ENCODE measurements at regions of chr15 and their contacts with region 1.

Region 1: DNA sequence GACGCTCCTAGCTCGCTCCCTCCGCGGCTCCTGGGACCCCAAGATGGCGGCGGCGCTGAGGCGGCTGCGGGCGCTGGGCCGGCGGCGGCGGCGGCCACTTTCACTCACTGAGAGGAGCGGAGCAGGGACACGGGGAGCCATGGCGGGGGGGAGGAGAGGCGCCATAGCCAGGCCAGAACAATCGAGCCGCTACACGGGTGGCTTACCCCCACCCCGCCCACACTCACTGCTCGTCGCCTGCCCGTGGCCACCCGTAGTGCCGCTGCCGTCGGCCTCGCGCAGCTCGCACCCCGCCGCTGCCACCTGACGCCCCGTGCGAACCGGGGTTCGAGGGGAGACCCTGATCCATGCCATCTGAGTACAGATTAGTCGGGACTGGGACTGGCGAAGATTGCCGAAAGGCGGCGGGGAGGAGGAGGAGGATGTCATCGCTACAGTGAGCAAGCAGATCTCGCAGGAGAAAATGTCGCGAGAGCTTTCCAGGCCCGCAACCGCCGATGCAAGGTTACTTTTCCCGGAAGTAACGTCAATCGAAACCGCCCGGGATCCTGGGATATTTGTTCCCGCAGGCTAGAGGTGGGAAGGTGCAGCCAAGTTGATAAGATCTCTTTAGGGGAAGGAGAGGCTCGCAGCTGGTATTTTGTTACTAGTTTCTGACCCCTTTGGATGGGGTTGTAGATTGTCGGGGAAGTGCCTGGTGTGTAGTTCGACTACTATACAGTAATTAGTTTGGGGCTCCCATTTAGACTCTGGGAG is at the start of gene INO80:
- DNase-seq: peak; percentile 99
- H3K4me3 ChIP-seq: peak within 1 kb of the TSS; percentile 90 to 99 (median 93)
- H3K27ac ChIP-seq: peak within 1 kb of the TSS; percentile 99 to 100 (median 99)
- H3K4me1 ChIP-seq: peaks cover 12 to 43% (median 30%) of the 10 kb centered on the region in 4 donors
- H3K27me3 ChIP-seq: peaks cover 0 to 11% (median 0%) of the 10 kb centered on the region in 4 donors
- CTCF ChIP-seq: peak in 1 of 3 experiments; percentile 3
- EP300 ChIP-seq: peak; percentile 8
- POLR2A ChIP-seq: no peak
- total RNA-seq, gene INO80: 22.4 to 28.7 (median 24.0) TPM

Region 2: DNA sequence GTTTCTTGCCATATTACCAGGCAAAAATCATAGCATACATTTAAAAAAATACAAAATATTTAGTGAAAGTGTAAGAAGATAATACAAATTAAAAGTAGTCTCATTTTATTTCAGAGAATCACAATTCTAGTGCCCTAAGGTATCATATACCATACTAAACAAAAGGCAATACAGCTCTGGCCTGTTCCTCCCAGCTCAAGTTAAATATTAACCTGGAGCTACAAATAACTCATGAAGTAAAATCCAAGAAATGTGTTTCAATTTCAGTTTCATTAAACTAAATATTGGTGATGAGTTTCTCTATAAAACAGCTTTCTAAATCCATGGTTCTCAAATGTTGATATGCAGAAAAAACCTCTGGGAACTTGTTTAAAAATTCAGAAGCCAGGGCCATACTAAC is 67.9 kb before region 1 on chr15:
- intact Hi-C with region 1: no loop called
- DNase-seq: no peak
- H3K4me3 ChIP-seq: no peak overlapping the region
- H3K27ac ChIP-seq: no peak overlapping the region
- H3K4me1 ChIP-seq: no peaks in the 10 kb centered on the region
- H3K27me3 ChIP-seq: no peaks in the 10 kb centered on the region
- CTCF ChIP-seq: no peak
- EP300 ChIP-seq: no peak
- POLR2A ChIP-seq: no peak

Region 3: DNA sequence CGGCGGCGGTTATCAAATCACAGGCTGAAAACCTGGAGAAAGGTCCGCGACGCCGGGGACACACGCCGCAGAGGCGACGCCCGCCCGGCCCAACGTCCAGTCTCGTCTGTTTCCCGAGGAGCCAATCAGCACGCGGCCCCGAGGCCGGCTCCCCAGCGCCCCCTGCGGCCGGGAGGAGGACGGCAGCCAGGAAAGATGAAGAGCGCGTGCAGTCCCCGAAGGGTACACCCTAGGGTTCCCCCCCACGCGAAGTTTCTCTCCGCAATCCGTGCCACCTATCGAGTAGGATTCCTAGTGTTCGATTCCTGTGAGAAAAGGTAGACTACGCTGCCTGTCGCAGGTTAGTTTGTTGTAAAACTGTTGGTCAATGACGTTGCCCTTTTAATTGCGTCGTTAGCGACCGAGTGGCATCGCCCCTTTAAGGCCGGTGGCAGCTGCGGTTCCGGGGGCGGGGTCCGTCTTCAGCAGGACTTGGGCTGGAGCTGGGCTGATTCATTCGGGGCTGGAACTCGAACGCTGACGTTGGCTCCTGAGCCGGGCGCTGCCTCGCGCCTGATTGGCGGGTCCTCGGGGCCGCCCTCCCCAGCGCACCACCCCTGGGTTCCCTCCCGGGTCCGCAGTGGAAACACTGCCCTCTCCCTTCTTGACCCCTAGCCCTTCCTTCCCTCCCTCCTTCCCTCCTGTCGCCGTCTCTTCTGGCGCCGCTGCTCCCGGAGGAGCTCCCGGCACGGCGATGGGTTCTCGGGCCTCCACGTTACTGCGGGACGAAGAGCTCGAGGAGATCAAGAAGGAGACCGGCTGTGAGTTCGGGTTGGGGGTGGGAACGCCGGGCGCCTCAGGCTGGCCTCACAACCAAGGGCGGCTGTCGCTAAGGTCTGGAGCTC is 114.6 kb after region 1 on chr15 and contains the starts of genes CHP1 and EXD1:
- intact Hi-C with region 1: loop called (anchors 2 kb)
- DNase-seq: peak; percentile 100
- H3K4me3 ChIP-seq: peak within 1 kb of the TSS; percentile 61 to 93 (median 84)
- H3K27ac ChIP-seq: peak within 1 kb of the TSS; percentile 92 to 97 (median 92)
- H3K4me1 ChIP-seq: peaks cover 17 to 36% (median 27%) of the 10 kb centered on the region in 4 donors
- H3K27me3 ChIP-seq: no peaks in the 10 kb centered on the region
- CTCF ChIP-seq: peak; percentile 94 to 99 (median 96)
- EP300 ChIP-seq: no peak
- POLR2A ChIP-seq: peak; percentile 57
- total RNA-seq, gene CHP1: 67.3 to 108 (median 94.5) TPM
- total RNA-seq, gene EXD1: not detected

Region 4: GRCh38 chr15:41416742-41417406 is 300.6 kb after region 1 on chr15 and contains the start of gene RTF1:
- intact Hi-C with region 1: loop called (anchors 10 kb)
- DNase-seq: peak; percentile 98
- H3K4me3 ChIP-seq: peak within 1 kb of the TSS; percentile 76 to 96 (median 86)
- H3K27ac ChIP-seq: peak within 1 kb of the TSS; percentile 82 to 94 (median 86)
- H3K4me1 ChIP-seq: peaks cover 23 to 51% (median 34%) of the 10 kb centered on the region in 4 donors
- H3K27me3 ChIP-seq: no peaks in the 10 kb centered on the region
- CTCF ChIP-seq: no peak
- EP300 ChIP-seq: no peak
- POLR2A ChIP-seq: peak; percentile 22
- total RNA-seq, gene RTF1: 31.5 to 37.7 (median 35.9) TPM